ENCODE measurements at regions of chr12 and their contacts with region 1.

Region 1: GRCh38 chr12:47705566-47706425 is at the start of gene RPAP3:
- DNase-seq: peak; percentile 97
- H3K4me3 Mint-ChIP-seq: peak within 1 kb of the TSS; percentile 97
- H3K27ac Mint-ChIP-seq: peak within 1 kb of the TSS; percentile 98
- H3K4me1 Mint-ChIP-seq: peaks cover 58% of the 10 kb centered on the region
- H3K27me3 Mint-ChIP-seq: no peaks in the 10 kb centered on the region
- total RNA-seq, gene RPAP3: 61.2 and 64.9 TPM in 2 replicates

Region 2: GRCh38 chr12:47079468-47079980 is 626.3 kb before region 1 on chr12 and contains the starts of genes AMIGO2 and PCED1B:
- intact Hi-C with region 1: loop called (anchors 5 kb)
- DNase-seq: peak; percentile 63
- H3K4me3 Mint-ChIP-seq: peak within 1 kb of the TSS; percentile 97
- H3K27ac Mint-ChIP-seq: peak within 1 kb of the TSS; percentile 97
- H3K4me1 Mint-ChIP-seq: peaks cover 81% of the 10 kb centered on the region
- H3K27me3 Mint-ChIP-seq: no peaks in the 10 kb centered on the region
- total RNA-seq, gene AMIGO2: 11.6 and 12.5 TPM in 2 replicates
- total RNA-seq, gene PCED1B: 50.8 and 55.5 TPM in 2 replicates

Region 3: GRCh38 chr12:47610686-47611252 is 95.0 kb before region 1 on chr12:
- intact Hi-C with region 1: no loop called
- DNase-seq: no peak
- H3K4me3 Mint-ChIP-seq: no peak overlapping the region
- H3K27ac Mint-ChIP-seq: no peak overlapping the region
- H3K4me1 Mint-ChIP-seq: no peaks in the 10 kb centered on the region
- H3K27me3 Mint-ChIP-seq: no peaks in the 10 kb centered on the region

Region 4: DNA sequence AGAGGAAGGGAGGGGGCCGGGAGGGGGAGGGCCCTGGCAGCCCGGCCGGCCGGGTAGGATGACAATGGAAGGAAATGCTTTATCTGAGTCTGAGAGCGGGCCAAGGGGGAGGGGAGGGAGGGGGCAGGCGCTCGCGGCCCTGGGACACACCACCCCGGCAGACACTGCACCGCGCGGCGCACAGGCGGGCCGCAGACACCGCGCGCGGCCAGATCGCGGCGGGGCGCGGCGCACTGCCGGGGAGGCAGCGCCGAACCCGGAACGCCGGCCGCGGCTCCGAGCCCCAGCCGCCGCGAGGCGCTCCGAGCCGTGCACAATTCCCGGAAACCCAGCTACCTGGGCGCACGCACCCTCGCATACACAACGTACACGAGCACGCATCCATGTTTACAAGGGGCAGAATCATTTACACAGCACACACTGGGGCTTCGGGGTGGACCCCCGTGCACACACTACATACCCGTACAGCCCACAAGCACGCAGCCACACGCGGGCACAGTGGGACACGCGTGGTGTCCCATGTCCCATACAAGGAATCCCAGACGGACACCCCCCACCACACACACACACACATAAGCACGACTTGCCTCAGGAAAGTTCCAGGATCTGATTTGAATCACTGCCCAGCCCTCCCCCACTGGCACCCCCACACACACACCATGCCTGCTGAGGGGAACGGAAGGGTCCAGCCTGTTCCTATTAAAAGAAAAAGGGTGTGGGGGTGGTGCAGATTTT is 114.3 kb after region 1 on chr12 and contains the start of gene HDAC7:
- intact Hi-C with region 1: loop called (anchors 1 kb)
- DNase-seq: peak; percentile 54
- H3K4me3 Mint-ChIP-seq: peak within 1 kb of the TSS; percentile 96
- H3K27ac Mint-ChIP-seq: peak within 1 kb of the TSS; percentile 98
- H3K4me1 Mint-ChIP-seq: peaks cover 78% of the 10 kb centered on the region
- H3K27me3 Mint-ChIP-seq: peaks cover 1% of the 10 kb centered on the region
- total RNA-seq, gene HDAC7: 453 and 466 TPM in 2 replicates

Region 5: DNA sequence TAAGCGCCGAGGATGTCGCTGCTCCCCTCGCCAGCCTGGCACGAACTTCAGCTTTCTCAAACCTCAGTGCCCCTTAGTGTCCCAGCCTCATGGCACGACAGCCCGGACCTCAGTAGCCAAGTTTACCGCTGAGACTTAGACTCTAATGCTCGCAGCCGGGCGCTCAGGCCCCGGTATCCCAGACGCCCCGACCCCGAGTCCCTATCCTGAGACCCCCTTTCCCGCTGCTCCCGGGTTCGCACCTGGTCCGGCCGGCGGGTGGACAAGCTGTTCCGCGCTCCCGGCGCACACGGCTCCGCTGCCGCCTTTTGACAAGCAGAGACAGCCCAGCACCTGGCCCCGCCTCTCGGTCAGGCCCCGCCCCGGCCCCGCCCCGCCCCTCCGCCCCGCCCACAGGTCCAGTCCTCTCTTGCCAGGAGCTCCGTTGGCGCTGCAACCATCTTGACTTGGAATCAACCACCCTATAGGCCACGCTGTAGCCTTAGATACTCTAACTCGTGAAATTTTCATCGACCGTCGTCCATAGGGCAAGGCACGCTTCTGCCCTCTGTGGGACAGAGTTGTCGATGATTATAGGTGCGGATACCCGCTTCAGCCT is 199.0 kb after region 1 on chr12 and contains the start of gene VDR:
- intact Hi-C with region 1: loop called (anchors 5 kb)
- DNase-seq: peak; percentile 62
- H3K4me3 Mint-ChIP-seq: peak within 1 kb of the TSS; percentile 100
- H3K27ac Mint-ChIP-seq: peak within 1 kb of the TSS; percentile 99
- H3K4me1 Mint-ChIP-seq: peaks cover 53% of the 10 kb centered on the region
- H3K27me3 Mint-ChIP-seq: peaks cover 34% of the 10 kb centered on the region
- total RNA-seq, gene VDR: 305 and 318 TPM in 2 replicates

Region 6: GRCh38 chr12:48183091-48183875 is 477.5 kb after region 1 on chr12 and contains the start of gene CCDC184:
- intact Hi-C with region 1: loop called (anchors 5 kb)
- DNase-seq: peak; percentile 76
- H3K4me3 Mint-ChIP-seq: peak within 1 kb of the TSS; percentile 91
- H3K27ac Mint-ChIP-seq: peak within 1 kb of the TSS; percentile 82
- H3K4me1 Mint-ChIP-seq: peaks cover 35% of the 10 kb centered on the region
- H3K27me3 Mint-ChIP-seq: peaks cover 52% of the 10 kb centered on the region
- total RNA-seq, gene CCDC184: 0.61 and 0.75 TPM in 2 replicates